Dendritic cell treated with granulocyte-macrophage colony-stimulating factor and Interleukin-4, amounts not matched to agents 40 ng/mL and 50 ng/mL, for 4 days (primary cell): ENCODE measurements at regions of chr18 and their contacts with region 1.

Region 1: GRCh38 chr18:6521795-6522418 is 107.2 kb upstream of the L3MBTL4 start:
- H3K4me3 Mint-ChIP-seq: no peak overlapping the region
- H3K27ac Mint-ChIP-seq: no peak overlapping the region
- H3K4me1 Mint-ChIP-seq: no peaks in the 10 kb centered on the region
- H3K27me3 Mint-ChIP-seq: peaks cover 3% of the 10 kb centered on the region

Region 2: GRCh38 chr18:5868218-5869115 is 653.4 kb before region 1 on chr18:
- intact Hi-C with region 1: loop called (anchors 2 kb)
- H3K4me3 Mint-ChIP-seq: no peak overlapping the region
- H3K27ac Mint-ChIP-seq: no peak overlapping the region
- H3K4me1 Mint-ChIP-seq: no peaks in the 10 kb centered on the region
- H3K27me3 Mint-ChIP-seq: peaks cover 11% of the 10 kb centered on the region

Region 3: DNA sequence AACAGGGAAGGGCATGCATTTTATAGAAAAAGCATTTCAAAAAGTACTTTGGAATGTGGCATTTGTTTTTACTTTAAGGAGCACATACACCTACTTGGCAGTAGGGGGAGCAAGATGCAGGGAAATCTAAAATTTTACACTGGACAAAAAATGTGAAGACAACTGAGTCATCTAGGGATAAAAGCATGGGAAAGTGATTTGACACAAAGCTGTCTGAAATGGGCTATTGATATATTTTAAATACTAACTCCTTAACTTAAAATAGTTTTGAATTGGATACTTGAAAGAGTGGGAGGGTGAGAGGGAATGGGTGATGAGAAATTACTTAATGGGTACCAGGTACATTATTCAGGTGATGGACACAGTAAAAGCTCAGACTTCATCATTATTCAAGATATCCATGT is 642.4 kb before region 1 on chr18:
- intact Hi-C with region 1: loop called (anchors 2 kb)
- H3K4me3 Mint-ChIP-seq: no peak overlapping the region
- H3K27ac Mint-ChIP-seq: no peak overlapping the region
- H3K4me1 Mint-ChIP-seq: no peaks in the 10 kb centered on the region
- H3K27me3 Mint-ChIP-seq: peaks cover 8% of the 10 kb centered on the region

Region 4: DNA sequence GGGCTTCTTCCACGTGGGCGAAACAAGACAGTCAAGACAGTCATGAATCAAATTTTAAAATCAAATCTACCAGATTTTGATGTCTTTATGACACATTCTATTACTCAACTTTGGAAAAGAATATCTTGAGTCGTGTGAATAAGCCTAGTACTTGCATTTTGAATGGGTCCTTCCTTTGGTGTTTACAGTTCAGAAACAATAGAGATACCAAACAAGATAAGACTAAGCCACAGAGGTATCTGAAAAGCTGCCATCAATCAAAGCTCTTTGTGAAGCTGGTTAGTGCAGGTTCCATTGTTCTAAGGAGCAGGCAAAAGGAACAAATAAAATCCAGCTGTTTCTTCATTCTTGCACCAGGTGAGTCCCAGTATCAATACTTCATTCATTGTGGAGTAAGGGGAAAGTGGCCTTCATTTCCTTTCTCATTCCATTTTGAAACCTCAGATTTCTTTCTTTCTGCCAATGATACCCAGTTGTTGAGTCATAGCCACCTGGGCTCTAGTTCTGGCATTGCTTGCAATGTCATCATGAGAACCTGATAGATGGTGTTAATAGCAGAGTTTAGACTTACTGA is 44.5 kb after region 1 on chr18:
- intact Hi-C with region 1: no loop called
- H3K4me3 Mint-ChIP-seq: no peak overlapping the region
- H3K27ac Mint-ChIP-seq: no peak overlapping the region
- H3K4me1 Mint-ChIP-seq: no peaks in the 10 kb centered on the region
- H3K27me3 Mint-ChIP-seq: no peaks in the 10 kb centered on the region